WTC11 (cell line): ENCODE measurements at regions of chr1 and their contacts with region 1.

Region 1: GRCh38 chr1:204746838-204747442 is 61.4 kb upstream of the LRRN2 start:
- DNase-seq: peak; percentile 68
- ATAC-seq: peak; percentile 87
- H3K4me3 Mint-ChIP-seq: no peak overlapping the region
- H3K27ac Mint-ChIP-seq: no peak overlapping the region
- H3K4me1 Mint-ChIP-seq: peaks cover 29% of the 10 kb centered on the region
- H3K27me3 Mint-ChIP-seq: peaks cover 12% of the 10 kb centered on the region; the same call in 1 of the 2 replicates
- CTCF ChIP-seq: peak; percentile 99

Region 2: DNA sequence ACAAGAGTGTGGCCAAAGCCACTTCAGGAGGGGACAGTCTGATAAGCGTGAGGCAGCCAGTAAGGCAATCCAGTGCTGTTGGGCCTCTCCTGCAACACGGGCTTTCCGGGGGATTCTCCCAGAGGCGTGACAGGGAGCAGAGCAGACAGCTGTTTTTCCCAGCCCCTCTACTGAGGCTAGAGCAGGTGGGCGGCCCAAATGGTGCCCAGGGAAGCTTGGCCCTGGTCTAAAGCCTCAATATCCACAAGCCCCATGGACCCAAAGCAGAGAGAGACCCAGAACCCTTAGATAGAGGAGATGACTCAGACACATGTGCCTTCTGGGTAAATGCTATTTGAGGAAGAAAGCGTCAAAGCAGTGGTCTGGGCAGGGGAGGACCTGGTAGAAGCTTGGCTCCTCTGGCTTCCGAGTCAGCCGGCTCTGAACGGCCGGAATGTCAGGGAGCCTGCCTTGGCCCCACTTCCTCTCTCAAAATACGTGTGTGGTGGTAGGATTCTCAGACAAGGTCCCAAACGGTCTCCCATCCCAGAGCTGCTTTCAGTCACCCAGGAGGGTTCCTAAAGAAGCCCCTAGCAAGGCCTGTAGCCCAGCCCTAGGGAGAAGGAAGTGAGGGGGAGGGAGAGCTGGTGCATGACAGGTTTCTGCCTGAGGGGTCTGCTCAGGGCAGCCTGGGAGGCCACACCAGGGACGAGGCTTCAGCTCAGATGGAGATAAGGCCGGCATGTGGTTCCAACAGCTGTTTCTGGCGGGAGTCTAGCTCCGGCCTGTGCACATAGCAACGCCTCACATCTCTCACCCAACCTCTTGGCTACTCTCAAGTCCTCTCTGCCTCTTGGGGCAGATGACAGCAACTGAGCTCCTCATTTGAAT is 281.2 kb before region 1 on chr1:
- CTCF ChIA-PET with region 1: no interaction called
- POLR2A ChIA-PET with region 1: no interaction called
- DNase-seq: no peak
- ATAC-seq: no peak
- H3K4me3 Mint-ChIP-seq: no peak overlapping the region
- H3K27ac Mint-ChIP-seq: peak overlapping the region; percentile 54; the same call in 1 of the 2 replicates
- H3K4me1 Mint-ChIP-seq: peaks cover 11% of the 10 kb centered on the region; the same call in 1 of the 2 replicates
- H3K27me3 Mint-ChIP-seq: no peaks in the 10 kb centered on the region
- CTCF ChIP-seq: no peak

Region 3: DNA sequence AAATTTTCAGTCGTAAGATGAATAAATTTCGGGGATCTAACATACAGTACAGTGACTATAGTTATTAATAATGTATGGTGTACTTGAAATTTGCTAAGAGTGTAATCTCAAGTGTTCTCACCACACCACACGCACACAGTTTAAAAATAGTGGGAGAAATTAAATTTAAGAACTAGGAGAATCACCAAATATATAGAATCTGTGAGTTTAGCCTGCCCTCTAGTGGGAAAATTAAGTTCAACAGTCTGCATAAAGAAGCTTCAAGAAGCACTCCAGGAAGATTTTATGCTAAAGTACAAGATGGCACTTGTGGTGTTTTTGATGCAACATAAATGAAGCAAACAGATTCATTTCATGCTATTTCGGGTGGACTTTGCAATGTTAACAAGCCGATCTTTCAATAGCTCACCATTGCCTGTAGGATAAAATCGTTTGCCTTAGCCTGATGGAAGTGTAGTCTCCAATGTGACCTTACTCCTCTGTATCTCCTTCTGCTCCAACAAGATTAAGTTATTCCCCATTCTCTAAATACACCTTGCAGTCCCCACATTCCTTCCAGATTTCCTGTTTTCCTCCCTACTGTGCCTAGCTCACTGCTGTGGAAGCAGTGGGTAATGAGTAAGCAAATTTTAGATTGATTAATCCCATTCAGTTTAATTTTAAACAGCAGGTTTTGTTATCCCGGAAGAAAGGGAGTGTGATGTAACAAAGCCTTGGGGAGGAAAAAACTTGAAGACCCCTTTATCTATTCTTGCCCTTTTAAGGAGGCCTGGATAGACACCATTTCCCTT is 243.6 kb before region 1 on chr1:
- CTCF ChIA-PET with region 1: no interaction called
- POLR2A ChIA-PET with region 1: no interaction called
- DNase-seq: no peak
- ATAC-seq: no peak
- H3K4me3 Mint-ChIP-seq: peak overlapping the region; percentile 13
- H3K27ac Mint-ChIP-seq: peak overlapping the region; percentile 18
- H3K4me1 Mint-ChIP-seq: peaks cover 9% of the 10 kb centered on the region
- H3K27me3 Mint-ChIP-seq: no peaks in the 10 kb centered on the region; the same call in 1 of the 2 replicates
- CTCF ChIP-seq: peak; percentile 64

Region 4: DNA sequence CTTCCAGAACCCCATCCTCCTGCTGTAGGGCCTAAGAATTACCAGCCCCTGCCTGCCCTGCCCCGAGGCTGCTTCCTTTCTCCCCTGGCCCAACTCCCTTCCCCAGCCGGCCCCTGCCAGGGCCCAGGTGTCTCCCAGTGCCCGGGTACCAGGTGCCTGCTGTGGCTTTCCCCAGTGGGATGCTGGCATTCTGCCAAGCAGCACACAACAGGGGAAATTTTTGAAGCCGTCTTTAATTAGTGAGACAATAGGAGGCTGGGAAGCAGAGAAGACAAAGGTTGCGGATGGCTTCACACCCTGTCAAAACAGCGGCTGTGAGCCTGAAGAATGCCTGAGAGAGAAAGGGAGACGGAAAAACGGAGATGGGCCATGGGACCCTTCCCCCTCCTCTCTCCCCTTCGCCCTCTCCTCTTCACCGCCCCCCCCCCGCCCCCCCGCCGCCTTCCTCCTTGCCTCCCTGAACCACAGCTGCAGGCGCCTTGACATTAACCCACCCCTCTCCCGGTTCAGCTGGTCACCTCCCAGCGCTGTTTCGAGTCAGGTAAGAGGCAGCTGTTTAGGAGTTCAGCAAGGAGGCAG is 95.0 kb before region 1 on chr1:
- CTCF ChIA-PET with region 1: interaction called, 22 read pairs
- POLR2A ChIA-PET with region 1: no interaction called
- DNase-seq: peak; percentile 50
- ATAC-seq: peak; percentile 72
- H3K4me3 Mint-ChIP-seq: peak overlapping the region; percentile 43
- H3K27ac Mint-ChIP-seq: no peak overlapping the region
- H3K4me1 Mint-ChIP-seq: peaks cover 43% of the 10 kb centered on the region
- H3K27me3 Mint-ChIP-seq: peaks cover 18% of the 10 kb centered on the region
- CTCF ChIP-seq: no peak

Region 5: GRCh38 chr1:204692325-204692840 is 54.6 kb before region 1 on chr1:
- CTCF ChIA-PET with region 1: interaction called, 12 read pairs
- POLR2A ChIA-PET with region 1: no interaction called
- DNase-seq: no peak
- ATAC-seq: peak; percentile 66
- H3K4me3 Mint-ChIP-seq: peak overlapping the region; percentile 28
- H3K27ac Mint-ChIP-seq: no peak overlapping the region
- H3K4me1 Mint-ChIP-seq: peaks cover 28% of the 10 kb centered on the region
- H3K27me3 Mint-ChIP-seq: peaks cover 56% of the 10 kb centered on the region
- CTCF ChIP-seq: no peak

Region 6: GRCh38 chr1:204726478-204726877 is 20.5 kb before region 1 on chr1:
- CTCF ChIA-PET with region 1: interaction called, 23 read pairs
- POLR2A ChIA-PET with region 1: no interaction called
- DNase-seq: no peak
- ATAC-seq: no peak
- H3K4me3 Mint-ChIP-seq: no peak overlapping the region
- H3K27ac Mint-ChIP-seq: no peak overlapping the region
- H3K4me1 Mint-ChIP-seq: peaks cover 23% of the 10 kb centered on the region
- H3K27me3 Mint-ChIP-seq: peaks cover 64% of the 10 kb centered on the region
- CTCF ChIP-seq: no peak

Region 7: GRCh38 chr1:204780630-204781029 is 33.7 kb after region 1 on chr1:
- CTCF ChIA-PET with region 1: interaction called, 11 read pairs
- POLR2A ChIA-PET with region 1: no interaction called
- DNase-seq: no peak
- ATAC-seq: no peak
- H3K4me3 Mint-ChIP-seq: no peak overlapping the region
- H3K27ac Mint-ChIP-seq: no peak overlapping the region
- H3K4me1 Mint-ChIP-seq: peaks cover under 1% of the 10 kb centered on the region
- H3K27me3 Mint-ChIP-seq: peaks cover 6% of the 10 kb centered on the region
- CTCF ChIP-seq: no peak

Region 8: DNA sequence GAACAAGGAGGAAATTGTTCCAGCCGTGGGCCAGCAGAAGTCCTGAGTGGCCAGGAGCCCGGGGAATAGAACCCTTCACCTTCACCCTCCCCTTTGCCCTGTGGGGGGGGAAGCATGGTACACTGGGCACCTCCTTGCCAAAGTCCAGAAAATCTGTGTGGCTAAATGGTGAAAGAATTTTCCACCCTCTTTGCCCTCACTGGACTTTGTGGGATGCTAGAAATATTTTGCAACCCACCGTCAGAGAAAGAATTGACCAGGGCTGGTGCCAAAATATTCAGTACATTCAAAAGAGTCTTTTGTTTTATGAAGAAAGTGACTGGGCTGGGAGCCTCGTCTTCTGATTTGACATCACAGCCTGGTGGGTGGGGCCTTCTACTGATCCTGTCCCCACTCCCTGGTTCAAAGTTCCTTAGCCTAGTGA is 138.4 kb after region 1 on chr1:
- CTCF ChIA-PET with region 1: no interaction called
- POLR2A ChIA-PET with region 1: no interaction called
- DNase-seq: no peak
- ATAC-seq: no peak
- H3K4me3 Mint-ChIP-seq: no peak overlapping the region
- H3K27ac Mint-ChIP-seq: no peak overlapping the region
- H3K4me1 Mint-ChIP-seq: peaks cover 34% of the 10 kb centered on the region
- H3K27me3 Mint-ChIP-seq: no peaks in the 10 kb centered on the region
- CTCF ChIP-seq: no peak

Region 9: DNA sequence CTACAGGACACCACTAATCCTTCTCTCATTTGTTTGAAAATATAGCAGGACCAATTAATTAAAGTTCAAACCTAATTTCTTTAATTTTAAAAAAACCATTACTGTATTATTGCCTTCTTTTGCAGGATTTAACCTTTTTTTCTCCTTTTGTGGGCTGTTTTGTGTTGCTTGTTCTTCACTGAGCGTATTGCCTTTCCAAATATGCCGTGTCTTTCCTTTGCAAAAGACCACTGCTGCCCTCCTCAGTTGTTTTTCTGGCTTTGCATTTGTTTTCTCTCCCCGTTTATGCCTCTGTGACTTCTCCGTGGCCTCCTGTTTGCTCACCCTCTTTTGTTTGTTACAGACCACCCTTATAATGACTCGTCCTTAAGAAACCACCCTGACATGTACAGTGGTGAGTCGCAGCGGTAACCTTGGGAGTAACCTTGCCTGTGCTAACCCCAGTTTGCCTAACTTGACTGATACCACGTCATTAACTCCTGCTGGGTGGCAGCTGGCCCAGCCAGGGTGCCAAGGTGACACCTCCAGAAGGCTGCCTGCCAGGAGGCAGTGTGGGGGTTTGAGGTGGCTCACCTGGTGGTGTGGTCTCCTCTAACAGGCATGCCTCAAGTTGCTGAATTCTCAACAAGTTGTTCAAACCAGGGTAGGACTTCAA is 215.0 kb after region 1 on chr1:
- CTCF ChIA-PET with region 1: no interaction called
- POLR2A ChIA-PET with region 1: no interaction called
- DNase-seq: no peak
- ATAC-seq: no peak; the same call in 1 of the 2 replicates
- H3K4me3 Mint-ChIP-seq: no peak overlapping the region
- H3K27ac Mint-ChIP-seq: no peak overlapping the region
- H3K4me1 Mint-ChIP-seq: peaks cover 9% of the 10 kb centered on the region
- H3K27me3 Mint-ChIP-seq: no peaks in the 10 kb centered on the region
- CTCF ChIP-seq: no peak